Activated naive CD4-positive, alpha-beta T cell treated with anti-CD3 and anti-CD28 coated beads for 36 hours (primary cell): ENCODE measurements at regions of chr4 and their contacts with region 1.

Region 1: GRCh38 chr4:110622841-110623717 is at the start of gene PITX2:
- DNase-seq: peak; percentile 80
- H3K4me3 Mint-ChIP-seq: peak within 1 kb of the TSS; percentile 64
- H3K27ac Mint-ChIP-seq: no peak within 1 kb of the TSS
- H3K4me1 Mint-ChIP-seq: peaks cover 32% of the 10 kb centered on the region
- H3K27me3 Mint-ChIP-seq: peaks cover 90% of the 10 kb centered on the region
- total RNA-seq, gene PITX2: not detected

Region 2: GRCh38 chr4:110586131-110586850 is 36.8 kb before region 1 on chr4:
- CTCF ChIA-PET with region 1: interaction called, 3 read pairs
- intact Hi-C with region 1: loop called (anchors 1 kb)
- DNase-seq: no peak
- H3K4me3 Mint-ChIP-seq: no peak overlapping the region
- H3K27ac Mint-ChIP-seq: no peak overlapping the region
- H3K4me1 Mint-ChIP-seq: no peaks in the 10 kb centered on the region
- H3K27me3 Mint-ChIP-seq: peaks cover 19% of the 10 kb centered on the region

Region 3: DNA sequence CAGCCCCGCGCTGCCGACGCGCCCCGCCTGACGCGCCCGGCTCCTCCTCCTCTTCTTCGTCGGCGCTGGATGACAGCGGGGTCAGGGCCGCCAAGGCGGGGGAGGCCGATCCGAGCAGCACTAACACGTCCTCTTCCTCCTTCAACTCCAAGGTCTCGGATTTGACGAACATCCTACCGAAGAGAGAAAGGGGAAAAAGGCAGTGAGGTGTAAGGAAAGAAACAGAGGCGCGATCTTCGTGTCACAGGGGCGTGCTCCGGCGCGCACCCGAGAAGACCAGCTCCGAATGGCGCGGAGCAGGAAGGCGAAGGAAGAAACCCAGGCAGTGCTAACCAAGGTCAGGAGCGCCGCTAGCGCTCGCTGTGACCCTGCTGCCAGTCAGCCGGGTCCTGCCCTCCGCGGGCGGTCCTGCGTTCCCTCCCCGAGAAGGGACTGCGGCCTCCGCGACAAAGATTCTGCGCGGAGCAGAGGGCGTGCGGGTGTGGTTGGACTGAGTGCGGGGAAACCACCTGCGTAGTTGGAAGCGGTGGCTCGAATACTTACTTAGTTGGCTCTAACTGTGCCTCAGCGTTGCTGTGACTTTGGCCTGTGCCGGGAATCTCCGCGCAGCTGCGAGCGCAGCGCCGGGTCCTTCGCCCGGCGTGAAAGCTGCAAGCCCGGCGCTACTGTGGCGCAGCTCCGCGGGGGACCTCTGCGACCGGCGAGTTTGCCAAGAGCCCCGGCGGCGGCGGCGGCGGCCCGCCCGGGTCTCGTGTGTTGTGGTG is 1892.4 kb after region 1 on chr4:
- CTCF ChIA-PET with region 1: interaction called, 3 read pairs
- intact Hi-C with region 1: loop called (anchors 5 kb)
- DNase-seq: peak; percentile 66
- H3K4me3 Mint-ChIP-seq: peak overlapping the region; percentile 96
- H3K27ac Mint-ChIP-seq: no peak overlapping the region
- H3K4me1 Mint-ChIP-seq: peaks cover 38% of the 10 kb centered on the region
- H3K27me3 Mint-ChIP-seq: peaks cover 83% of the 10 kb centered on the region